Activated CD8-positive, alpha-beta T cell treated with anti-CD3 and anti-CD28 coated beads, Interleukin-2, amount 10 ng/mL, durations not matched to agents 7 days and 5 days (primary cell): ENCODE measurements at regions of chr1 and their contacts with region 1.

Region 1: DNA sequence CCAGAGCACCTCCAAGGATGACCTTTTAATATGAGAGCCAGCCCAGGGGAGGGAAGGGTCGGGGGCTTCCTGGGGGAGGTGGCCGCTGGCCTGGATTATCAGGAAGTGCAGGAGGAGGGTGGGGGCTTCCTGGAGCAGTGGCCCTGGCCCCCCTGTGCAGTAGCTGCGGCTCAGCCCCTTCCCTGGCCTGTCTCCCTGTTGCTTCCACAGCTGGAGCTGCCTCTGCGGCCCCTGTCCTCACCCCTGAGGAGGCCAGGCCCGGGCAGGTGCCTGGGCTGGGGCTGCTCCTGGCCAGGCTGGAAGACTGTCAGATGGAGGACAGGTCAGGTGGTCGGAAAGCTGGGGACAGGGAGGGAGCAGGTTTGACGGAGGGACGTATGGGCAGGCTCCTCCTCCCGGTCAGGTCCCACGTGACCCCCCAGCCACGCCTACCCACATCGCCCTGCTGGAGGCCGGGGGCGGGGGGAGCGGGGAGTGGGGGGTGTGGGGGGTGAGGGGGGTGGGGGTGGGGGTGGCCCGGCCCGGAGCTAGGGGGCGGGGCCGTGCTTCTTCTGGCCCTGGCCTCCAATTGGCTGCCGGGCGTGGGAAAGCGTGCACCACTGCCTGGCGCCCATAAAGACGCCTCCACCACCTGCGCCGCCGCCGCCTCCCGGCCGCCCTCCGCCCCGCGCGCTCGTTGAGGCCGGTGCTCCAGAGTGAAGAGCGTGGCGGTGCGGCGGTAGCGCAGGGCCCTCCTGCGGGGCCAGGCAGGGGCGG is 10.2 kb upstream of the TNFRSF14 start:
- DNase-seq: peak; percentile 94
- ATAC-seq: peak; percentile 63
- H3K4me3 Mint-ChIP-seq: peak overlapping the region; percentile 85
- H3K27ac Mint-ChIP-seq: peak overlapping the region; percentile 98
- H3K4me1 Mint-ChIP-seq: peaks cover 37% of the 10 kb centered on the region
- H3K27me3 Mint-ChIP-seq: peaks cover 4% of the 10 kb centered on the region

Region 2: GRCh38 chr1:2391041-2391930 is 154.7 kb before region 1 on chr1 and contains the starts of genes MORN1 and RER1:
- CTCF ChIA-PET with region 1: interaction called, 4 read pairs
- POLR2A ChIA-PET with region 1: interaction called, 17 read pairs
- DNase-seq: peak; percentile 99
- ATAC-seq: peak; percentile 98
- H3K4me3 Mint-ChIP-seq: peak within 1 kb of the TSS; percentile 92
- H3K27ac Mint-ChIP-seq: peak within 1 kb of the TSS; percentile 92
- H3K4me1 Mint-ChIP-seq: peaks cover 40% of the 10 kb centered on the region
- H3K27me3 Mint-ChIP-seq: no peaks in the 10 kb centered on the region
- total RNA-seq, gene MORN1: 6.2 to 7.9 TPM
- total RNA-seq, gene RER1: 148 to 151 TPM

Region 3: DNA sequence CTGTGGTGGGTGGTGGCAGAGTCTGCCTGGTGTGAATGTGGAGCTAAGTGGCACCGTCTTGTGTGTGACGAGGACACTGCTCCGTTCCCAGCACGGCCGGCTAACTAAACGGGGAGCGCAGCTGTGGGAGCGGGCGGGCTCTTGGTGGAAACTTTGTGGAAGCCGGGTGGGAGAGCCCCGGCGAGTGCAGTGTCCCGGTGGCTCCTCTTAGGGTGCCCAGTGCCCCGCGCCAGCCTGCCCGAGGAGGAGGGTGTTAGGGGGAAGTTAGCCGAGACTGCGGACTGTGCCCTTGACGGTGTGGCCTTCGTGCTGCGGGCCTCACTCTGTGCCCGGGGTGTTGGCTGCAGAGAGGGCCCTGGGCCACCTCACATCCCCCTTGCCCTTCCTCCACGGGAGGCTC is 143.5 kb before region 1 on chr1:
- CTCF ChIA-PET with region 1: no interaction called
- POLR2A ChIA-PET with region 1: no interaction called
- DNase-seq: no peak
- ATAC-seq: no peak
- H3K4me3 Mint-ChIP-seq: no peak overlapping the region
- H3K27ac Mint-ChIP-seq: peak overlapping the region; percentile 43
- H3K4me1 Mint-ChIP-seq: peaks cover 12% of the 10 kb centered on the region
- H3K27me3 Mint-ChIP-seq: no peaks in the 10 kb centered on the region

Region 4: DNA sequence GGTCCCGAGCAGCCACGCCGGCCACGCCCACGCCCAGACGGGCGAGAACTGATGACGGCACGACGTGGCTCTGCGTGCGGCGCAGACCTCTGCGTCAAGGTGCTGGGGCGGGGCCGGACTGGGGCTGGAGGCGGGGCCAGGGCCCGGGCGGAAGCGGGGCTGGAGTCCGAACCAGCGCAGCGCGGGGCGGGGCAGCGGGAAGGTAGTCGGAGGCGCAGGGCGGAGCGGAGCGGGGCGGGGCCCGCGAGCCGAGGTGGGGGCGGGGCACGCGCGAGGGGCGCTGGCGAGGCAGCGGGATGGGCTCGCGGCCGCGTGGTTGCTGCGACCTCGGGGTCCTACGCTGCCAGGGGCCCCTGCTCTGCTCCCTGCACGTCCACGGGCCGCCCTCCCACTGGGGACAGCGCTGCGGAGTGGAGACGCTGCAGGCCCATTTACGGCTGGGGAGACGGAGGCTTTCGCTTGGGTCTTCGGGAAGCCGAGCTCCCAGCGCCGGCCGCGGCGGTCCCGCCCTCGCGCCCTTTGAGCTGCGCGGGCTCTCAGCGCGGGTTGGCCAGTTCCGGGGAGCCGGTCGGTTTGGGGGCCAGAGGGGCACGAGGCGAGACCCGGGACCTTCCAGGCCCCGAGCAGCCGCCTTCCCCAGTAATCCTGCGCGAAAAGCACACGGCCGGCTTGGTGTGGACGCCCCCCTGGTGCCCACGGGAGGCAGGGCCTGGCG is 133.3 kb before region 1 on chr1 and contains the start of gene PEX10:
- CTCF ChIA-PET with region 1: interaction called, 44 read pairs
- POLR2A ChIA-PET with region 1: interaction called, 24 read pairs
- DNase-seq: peak; percentile 99
- ATAC-seq: peak; percentile 85
- H3K4me3 Mint-ChIP-seq: peak within 1 kb of the TSS; percentile 90
- H3K27ac Mint-ChIP-seq: peak within 1 kb of the TSS; percentile 94
- H3K4me1 Mint-ChIP-seq: peaks cover 45% of the 10 kb centered on the region
- H3K27me3 Mint-ChIP-seq: no peaks in the 10 kb centered on the region
- total RNA-seq, gene PEX10: 10.3 to 12.3 TPM

Region 5: DNA sequence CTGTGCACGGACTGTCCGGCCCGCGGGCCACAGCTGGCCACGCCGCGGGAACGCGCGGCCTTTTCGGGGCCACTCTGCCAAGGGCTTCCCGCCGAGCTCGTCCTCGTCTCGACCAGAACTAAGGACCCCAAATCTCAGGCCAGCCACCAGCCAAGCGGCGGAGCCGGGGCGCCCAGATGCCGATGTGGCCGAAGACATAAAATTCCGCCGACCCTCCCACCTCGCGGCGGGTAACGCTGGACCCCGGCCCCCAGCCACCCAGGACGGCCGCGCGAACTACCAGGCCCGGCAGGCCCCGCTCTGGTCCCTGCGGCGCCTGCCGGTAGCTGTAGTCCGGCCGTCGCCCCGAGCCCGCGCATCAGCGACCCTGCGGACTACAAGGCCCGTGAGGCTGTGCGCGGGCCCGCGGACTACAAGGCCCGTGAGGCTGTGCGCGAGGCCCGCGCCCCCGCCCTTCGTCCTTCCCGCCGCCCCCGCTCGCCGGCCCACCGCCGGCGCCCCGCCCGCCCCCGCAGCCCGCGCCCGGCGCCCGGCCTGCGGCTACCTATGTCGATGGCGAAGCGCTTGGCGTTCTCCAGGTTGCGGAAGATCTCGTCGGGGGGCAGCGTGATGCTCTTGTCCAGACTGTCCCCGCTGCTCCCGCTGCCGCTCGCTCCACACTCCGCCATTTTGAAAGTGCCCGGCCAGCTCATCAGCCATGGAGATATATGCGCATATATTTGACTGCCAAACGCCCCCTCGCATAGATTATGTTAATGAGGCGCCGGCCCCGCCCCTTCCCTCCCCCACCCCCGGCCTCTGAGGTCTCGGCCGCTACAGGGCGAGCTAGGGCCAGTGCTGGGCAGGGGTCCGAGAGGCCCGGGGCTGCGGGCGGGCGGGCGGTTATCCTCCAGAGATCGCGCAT is 19.8 kb before region 1 on chr1 and contains the start of gene PANK4:
- CTCF ChIA-PET with region 1: interaction called, 51 read pairs
- POLR2A ChIA-PET with region 1: interaction called, 96 read pairs
- DNase-seq: peak; percentile 93
- ATAC-seq: peak; percentile 89
- H3K4me3 Mint-ChIP-seq: peak within 1 kb of the TSS; percentile 81
- H3K27ac Mint-ChIP-seq: peak within 1 kb of the TSS; percentile 94
- H3K4me1 Mint-ChIP-seq: peaks cover 49% of the 10 kb centered on the region
- H3K27me3 Mint-ChIP-seq: peaks cover 19% of the 10 kb centered on the region
- total RNA-seq, gene PANK4: 55.9 to 66.8 TPM

Region 6: DNA sequence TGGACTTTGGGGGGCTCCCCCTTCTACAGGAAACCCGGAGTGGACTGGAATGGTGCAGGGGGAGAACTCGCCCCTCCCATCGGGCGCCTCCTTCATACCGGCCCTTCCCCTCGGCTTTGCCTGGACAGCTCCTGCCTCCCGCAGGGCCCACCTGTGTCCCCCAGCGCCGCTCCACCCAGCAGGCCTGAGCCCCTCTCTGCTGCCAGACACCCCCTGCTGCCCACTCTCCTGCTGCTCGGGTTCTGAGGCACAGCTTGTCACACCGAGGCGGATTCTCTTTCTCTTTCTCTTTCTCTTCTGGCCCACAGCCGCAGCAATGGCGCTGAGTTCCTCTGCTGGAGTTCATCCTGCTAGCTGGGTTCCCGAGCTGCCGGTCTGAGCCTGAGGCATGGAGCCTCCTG is 10.3 kb after region 1 on chr1 and contains the start of gene TNFRSF14:
- CTCF ChIA-PET with region 1: interaction called, 16 read pairs
- POLR2A ChIA-PET with region 1: interaction called, 58 read pairs
- DNase-seq: peak; percentile 90
- ATAC-seq: peak; percentile 77
- H3K4me3 Mint-ChIP-seq: peak within 1 kb of the TSS; percentile 97
- H3K27ac Mint-ChIP-seq: peak within 1 kb of the TSS; percentile 98
- H3K4me1 Mint-ChIP-seq: peaks cover 46% of the 10 kb centered on the region
- H3K27me3 Mint-ChIP-seq: no peaks in the 10 kb centered on the region
- total RNA-seq, gene TNFRSF14: 85.8 to 86.5 TPM

Region 7: DNA sequence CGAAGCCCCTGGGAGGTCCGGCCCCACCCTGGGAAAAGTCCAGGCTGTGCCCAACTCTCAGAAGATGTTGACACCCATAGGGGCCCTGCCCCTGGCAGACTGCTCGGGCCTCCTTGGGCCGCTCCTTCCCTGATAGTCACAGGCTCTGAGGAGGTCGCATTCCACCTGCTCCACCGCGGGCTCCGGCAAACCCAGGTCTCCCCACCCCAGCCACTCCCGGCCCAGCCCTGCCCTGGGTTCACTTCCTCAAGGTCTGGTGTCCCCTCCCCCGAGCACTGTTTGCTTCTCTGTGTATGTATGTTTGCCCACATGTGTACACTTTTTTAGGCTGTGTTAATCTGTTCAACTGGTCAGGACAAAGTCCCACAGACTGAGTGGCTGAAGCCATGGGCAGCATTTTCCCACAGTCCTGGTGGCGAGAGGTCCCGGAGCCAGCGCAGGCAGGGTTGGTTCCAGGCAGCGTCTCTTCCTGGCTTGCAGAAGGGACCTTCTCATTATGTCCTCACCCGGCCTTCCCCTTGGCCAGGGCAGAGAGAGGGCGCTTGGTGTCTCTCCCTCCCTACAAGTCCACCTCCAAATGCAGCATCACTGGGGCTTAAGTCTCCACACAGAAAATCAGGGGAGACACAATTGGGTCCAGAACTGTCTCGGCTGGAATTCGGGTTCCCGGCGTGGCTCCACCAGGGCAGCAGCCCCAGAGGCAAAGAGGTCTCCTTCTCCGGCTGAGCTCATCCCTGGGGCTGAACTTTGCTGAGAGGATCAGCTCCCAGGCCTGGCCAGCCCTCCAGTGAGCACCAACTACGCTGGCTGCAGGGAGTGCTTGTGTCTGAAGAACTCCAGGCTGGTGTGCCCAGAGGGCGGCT is 30.1 kb after region 1 on chr1:
- CTCF ChIA-PET with region 1: interaction called, 6 read pairs
- POLR2A ChIA-PET with region 1: interaction called, 30 read pairs
- DNase-seq: no peak
- ATAC-seq: no peak
- H3K4me3 Mint-ChIP-seq: no peak overlapping the region
- H3K27ac Mint-ChIP-seq: peak overlapping the region; percentile 55
- H3K4me1 Mint-ChIP-seq: peaks cover 56% of the 10 kb centered on the region
- H3K27me3 Mint-ChIP-seq: peaks cover 5% of the 10 kb centered on the region

Region 8: GRCh38 chr1:2594001-2594640 is 48.2 kb after region 1 on chr1:
- CTCF ChIA-PET with region 1: no interaction called
- POLR2A ChIA-PET with region 1: no interaction called
- DNase-seq: no peak
- ATAC-seq: no peak
- H3K4me3 Mint-ChIP-seq: no peak overlapping the region
- H3K27ac Mint-ChIP-seq: no peak overlapping the region
- H3K4me1 Mint-ChIP-seq: peaks cover 4% of the 10 kb centered on the region
- H3K27me3 Mint-ChIP-seq: peaks cover 3% of the 10 kb centered on the region